Activated CD4-positive, alpha-beta memory T cell treated with anti-CD3 and anti-CD28 coated beads, Interleukin-2, amount 10 ng/mL, durations not matched to agents 7 days and 5 days (primary cell): ENCODE measurements at regions of chr10 and their contacts with region 1.

Region 1: GRCh38 chr10:110354322-110354766 is 49.6 kb upstream of the SMNDC1 start:
- DNase-seq: peak; percentile 89
- H3K4me3 Mint-ChIP-seq: peak overlapping the region; percentile 84
- H3K27ac Mint-ChIP-seq: peak overlapping the region; percentile 97
- H3K4me1 Mint-ChIP-seq: peaks cover 66% of the 10 kb centered on the region
- H3K27me3 Mint-ChIP-seq: peaks cover 3% of the 10 kb centered on the region

Region 2: DNA sequence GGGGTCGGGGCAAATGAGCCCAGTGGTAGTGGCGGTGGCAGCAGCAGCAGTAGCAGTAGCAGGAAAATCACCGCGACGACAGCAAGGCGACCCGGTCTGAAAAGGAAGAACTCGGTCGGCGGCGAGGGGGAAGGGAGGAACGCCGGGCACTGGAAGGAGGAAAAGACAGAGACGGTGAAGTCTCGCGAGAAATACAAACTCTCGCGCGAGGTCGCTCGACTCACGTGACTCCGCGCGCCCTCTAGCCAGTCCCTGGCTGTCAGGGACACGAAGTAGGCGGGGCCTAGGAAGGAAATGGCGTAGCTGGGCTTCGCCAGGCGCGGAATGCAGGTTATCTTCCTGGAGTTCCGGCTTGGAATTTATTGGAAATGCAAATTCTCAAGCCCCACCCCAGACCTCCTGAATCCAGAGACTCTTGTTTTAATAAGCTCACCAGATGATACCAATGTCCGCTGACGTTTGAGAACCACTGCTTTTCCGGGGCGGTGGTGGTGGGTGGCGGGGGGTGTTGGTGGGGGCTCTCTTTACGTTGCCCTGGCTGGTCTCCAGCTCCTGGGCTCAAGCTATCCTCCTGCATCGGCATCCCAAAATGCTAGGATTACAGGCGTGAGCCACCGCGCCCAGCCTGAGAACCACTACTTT is 49.4 kb before region 1 on chr10 and contains the start of gene SMNDC1:
- CTCF ChIA-PET with region 1: interaction called, 9 read pairs
- POLR2A ChIA-PET with region 1: interaction called, 38 read pairs
- DNase-seq: peak; percentile 98
- H3K4me3 Mint-ChIP-seq: peak within 1 kb of the TSS; percentile 97
- H3K27ac Mint-ChIP-seq: peak within 1 kb of the TSS; percentile 96
- H3K4me1 Mint-ChIP-seq: peaks cover 55% of the 10 kb centered on the region
- H3K27me3 Mint-ChIP-seq: no peaks in the 10 kb centered on the region
- total RNA-seq, gene SMNDC1: 40.8 to 45.6 TPM

Region 3: GRCh38 chr10:110336111-110336721 is 18.1 kb before region 1 on chr10:
- CTCF ChIA-PET with region 1: interaction called, 14 read pairs
- POLR2A ChIA-PET with region 1: interaction called, 51 read pairs
- DNase-seq: no peak
- H3K4me3 Mint-ChIP-seq: no peak overlapping the region
- H3K27ac Mint-ChIP-seq: peak overlapping the region; percentile 81
- H3K4me1 Mint-ChIP-seq: peaks cover 52% of the 10 kb centered on the region
- H3K27me3 Mint-ChIP-seq: no peaks in the 10 kb centered on the region

Region 4: GRCh38 chr10:110368002-110368401 is 13.7 kb after region 1 on chr10:
- CTCF ChIA-PET with region 1: interaction called, 20 read pairs
- POLR2A ChIA-PET with region 1: interaction called, 50 read pairs
- DNase-seq: no peak
- H3K4me3 Mint-ChIP-seq: no peak overlapping the region
- H3K27ac Mint-ChIP-seq: no peak overlapping the region
- H3K4me1 Mint-ChIP-seq: peaks cover 60% of the 10 kb centered on the region
- H3K27me3 Mint-ChIP-seq: no peaks in the 10 kb centered on the region

Region 5: GRCh38 chr10:110414563-110415309 is 60.4 kb after region 1 on chr10:
- CTCF ChIA-PET with region 1: interaction called, 26 read pairs
- POLR2A ChIA-PET with region 1: interaction called, 89 read pairs
- DNase-seq: peak; percentile 95
- H3K4me3 Mint-ChIP-seq: peak overlapping the region; percentile 40
- H3K27ac Mint-ChIP-seq: peak overlapping the region; percentile 88
- H3K4me1 Mint-ChIP-seq: peaks cover 94% of the 10 kb centered on the region
- H3K27me3 Mint-ChIP-seq: no peaks in the 10 kb centered on the region

Region 6: GRCh38 chr10:110425684-110426293 is 71.4 kb after region 1 on chr10:
- CTCF ChIA-PET with region 1: interaction called, 8 read pairs
- POLR2A ChIA-PET with region 1: interaction called, 13 read pairs
- DNase-seq: peak; percentile 76
- H3K4me3 Mint-ChIP-seq: peak overlapping the region; percentile 8
- H3K27ac Mint-ChIP-seq: peak overlapping the region; percentile 74
- H3K4me1 Mint-ChIP-seq: peaks cover 84% of the 10 kb centered on the region
- H3K27me3 Mint-ChIP-seq: no peaks in the 10 kb centered on the region

Region 7: GRCh38 chr10:110547139-110547761 is 192.9 kb after region 1 on chr10:
- CTCF ChIA-PET with region 1: interaction called, 37 read pairs
- POLR2A ChIA-PET with region 1: interaction called, 23 read pairs
- DNase-seq: no peak
- H3K4me3 Mint-ChIP-seq: no peak overlapping the region
- H3K27ac Mint-ChIP-seq: no peak overlapping the region
- H3K4me1 Mint-ChIP-seq: peaks cover 10% of the 10 kb centered on the region
- H3K27me3 Mint-ChIP-seq: peaks cover 25% of the 10 kb centered on the region